Naive thymus-derived CD4-positive, alpha-beta T cell (primary cell): ENCODE measurements at regions of chr3 and their contacts with region 1.

Region 1: DNA sequence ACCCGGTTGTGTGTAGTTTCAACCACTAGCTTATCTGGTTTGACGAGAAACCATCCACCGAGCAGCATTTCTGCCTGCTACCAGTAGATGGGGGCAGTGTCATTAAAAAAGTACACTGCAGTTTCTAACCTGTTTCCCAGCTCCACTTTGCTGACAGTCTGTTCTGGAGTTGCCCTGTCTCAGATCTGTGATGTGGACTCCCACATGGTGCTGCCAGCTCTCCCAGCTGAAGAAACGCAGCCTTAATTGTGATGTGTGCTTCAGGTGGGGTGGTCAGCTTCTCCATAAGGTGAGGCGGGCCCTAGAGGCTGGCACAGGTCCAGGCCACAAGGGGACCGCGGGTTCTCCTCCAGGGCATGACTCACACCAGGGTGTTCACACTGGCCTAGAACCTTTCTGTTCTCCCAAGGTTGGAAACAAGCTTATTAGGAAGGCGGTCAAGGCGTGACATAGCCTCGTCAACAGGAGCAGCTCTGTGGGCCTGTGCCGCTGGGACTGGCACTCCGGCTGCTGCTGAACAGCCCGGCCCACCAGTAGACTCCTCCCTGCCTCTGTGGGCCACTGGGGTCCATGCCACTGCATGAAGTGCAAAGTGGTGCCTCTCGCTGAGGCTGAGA is 2.9 kb upstream of the FAM43A start:
- DNase-seq: peak; percentile 33 to 75 (median 60)
- ATAC-seq: peak; percentile 77
- H3K4me3 ChIP-seq: no peak overlapping the region
- H3K4me3 Mint-ChIP-seq: peak overlapping the region in 2 of 10 donors; percentile 12 to 25
- H3K27ac ChIP-seq: no peak overlapping the region
- H3K27ac Mint-ChIP-seq: peak overlapping the region in 1 of 9 donors; percentile 25
- H3K4me1 ChIP-seq: peaks cover 12 to 14% of the 10 kb centered on the region in 2 donors
- H3K4me1 Mint-ChIP-seq: peaks cover 10 to 41% (median 28%) of the 10 kb centered on the region in 7 donors
- H3K27me3 ChIP-seq: no peaks in the 10 kb centered on the region
- H3K27me3 Mint-ChIP-seq: peaks cover 0 to 37% (median 0%) of the 10 kb centered on the region in 5 donors

Region 2: GRCh38 chr3:194592798-194593752 is 89.7 kb before region 1 on chr3:
- CTCF ChIA-PET with region 1: no interaction called
- POLR2A ChIA-PET with region 1: no interaction called
- intact Hi-C with region 1: loop called in 1 of 2 experiments (anchors 5 kb)
- DNase-seq: no peak
- ATAC-seq: no peak
- H3K4me3 ChIP-seq: no peak overlapping the region
- H3K4me3 Mint-ChIP-seq: no peak overlapping the region
- H3K27ac ChIP-seq: no peak overlapping the region
- H3K27ac Mint-ChIP-seq: no peak overlapping the region
- H3K4me1 ChIP-seq: no peaks in the 10 kb centered on the region
- H3K4me1 Mint-ChIP-seq: peaks cover 0 to 7% (median 4%) of the 10 kb centered on the region in 7 donors
- H3K27me3 ChIP-seq: no peaks in the 10 kb centered on the region
- H3K27me3 Mint-ChIP-seq: no peaks in the 10 kb centered on the region

Region 3: GRCh38 chr3:194777729-194778128 is 94.9 kb after region 1 on chr3:
- CTCF ChIA-PET with region 1: no interaction called
- POLR2A ChIA-PET with region 1: no interaction called
- intact Hi-C with region 1: no loop called
- DNase-seq: no peak
- ATAC-seq: no peak
- H3K4me3 ChIP-seq: no peak overlapping the region
- H3K4me3 Mint-ChIP-seq: no peak overlapping the region
- H3K27ac ChIP-seq: no peak overlapping the region
- H3K27ac Mint-ChIP-seq: no peak overlapping the region
- H3K4me1 ChIP-seq: no peaks in the 10 kb centered on the region
- H3K4me1 Mint-ChIP-seq: peaks cover 0 to 2% (median 0%) of the 10 kb centered on the region in 7 donors
- H3K27me3 ChIP-seq: no peaks in the 10 kb centered on the region
- H3K27me3 Mint-ChIP-seq: peaks cover 16 to 27% (median 23%) of the 10 kb centered on the region in 5 donors

Region 4: GRCh38 chr3:195001961-195002861 is 319.4 kb after region 1 on chr3:
- CTCF ChIA-PET with region 1: no interaction called
- POLR2A ChIA-PET with region 1: no interaction called
- intact Hi-C with region 1: loop called in 1 of 2 experiments (anchors 1 kb)
- DNase-seq: peak in 4 of 9 donors; percentile 5 to 12 (median 10)
- ATAC-seq: peak; percentile 65
- H3K4me3 ChIP-seq: no peak overlapping the region
- H3K4me3 Mint-ChIP-seq: no peak overlapping the region
- H3K27ac ChIP-seq: no peak overlapping the region
- H3K27ac Mint-ChIP-seq: no peak overlapping the region
- H3K4me1 ChIP-seq: no peaks in the 10 kb centered on the region
- H3K4me1 Mint-ChIP-seq: peaks cover 0 to 6% (median 0%) of the 10 kb centered on the region in 7 donors
- H3K27me3 ChIP-seq: no peaks in the 10 kb centered on the region
- H3K27me3 Mint-ChIP-seq: peaks cover 0 to 14% (median 0%) of the 10 kb centered on the region in 5 donors

Region 5: DNA sequence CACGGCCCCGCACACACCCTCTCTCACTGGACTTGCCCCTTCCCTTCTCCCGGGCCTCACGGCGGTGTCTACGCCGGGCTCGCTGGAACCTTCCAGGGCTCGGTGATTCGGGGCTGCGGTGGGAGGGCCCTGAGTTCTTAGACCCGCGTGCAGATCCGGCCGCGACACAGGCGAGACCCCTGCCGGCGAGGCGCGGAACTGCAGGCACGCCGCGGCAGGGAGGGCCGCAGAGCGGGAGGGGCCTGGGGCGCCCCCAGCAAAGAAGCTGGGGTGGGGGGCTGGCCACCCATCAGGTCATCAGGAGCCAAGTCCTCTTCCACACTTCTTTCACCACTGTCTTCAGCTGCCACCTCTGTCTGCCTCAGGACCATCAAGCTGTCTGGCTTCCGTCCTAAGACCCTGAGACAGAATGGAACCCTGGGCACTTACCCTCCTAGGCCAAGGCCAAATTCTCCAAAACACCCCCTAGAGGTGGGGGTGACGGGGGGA is 423.7 kb after region 1 on chr3:
- CTCF ChIA-PET with region 1: interaction called, 53 read pairs
- POLR2A ChIA-PET with region 1: no interaction called
- intact Hi-C with region 1: loop called (anchors 1 kb)
- DNase-seq: peak; percentile 44 to 82 (median 70)
- ATAC-seq: peak; percentile 89
- H3K4me3 ChIP-seq: no peak overlapping the region
- H3K4me3 Mint-ChIP-seq: peak overlapping the region; percentile 10 to 71 (median 62)
- H3K27ac ChIP-seq: no peak overlapping the region
- H3K27ac Mint-ChIP-seq: peak overlapping the region in 1 of 9 donors; percentile 43
- H3K4me1 ChIP-seq: no peaks in the 10 kb centered on the region
- H3K4me1 Mint-ChIP-seq: peaks cover 5 to 10% (median 6%) of the 10 kb centered on the region in 7 donors
- H3K27me3 ChIP-seq: no peaks in the 10 kb centered on the region
- H3K27me3 Mint-ChIP-seq: no peaks in the 10 kb centered on the region

Region 6: DNA sequence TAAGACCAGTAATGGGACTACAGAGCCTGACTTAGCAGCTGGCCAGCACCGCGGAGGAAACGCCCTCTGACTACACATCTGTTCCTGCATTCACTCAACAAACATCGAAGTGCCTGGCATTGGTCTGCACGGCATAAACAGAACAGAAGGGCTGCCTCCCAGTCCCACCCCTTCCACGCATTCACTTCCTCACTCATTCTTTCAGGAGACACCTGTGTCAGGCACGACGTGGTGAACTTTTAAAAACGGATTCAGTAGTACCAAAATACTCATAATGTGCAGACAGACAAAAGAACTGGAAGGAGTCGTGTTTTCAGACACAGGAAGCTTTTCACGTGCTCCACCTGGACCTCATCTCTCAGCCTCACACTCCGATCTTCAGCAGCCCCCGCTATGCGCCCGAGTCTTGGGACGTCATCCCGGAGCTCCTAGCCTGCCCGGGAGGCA is 464.9 kb after region 1 on chr3:
- CTCF ChIA-PET with region 1: no interaction called
- POLR2A ChIA-PET with region 1: interaction called, 4 read pairs
- intact Hi-C with region 1: loop called in 1 of 2 experiments (anchors 1 kb)
- DNase-seq: peak in 3 of 9 donors; percentile 4 to 15 (median 4)
- ATAC-seq: peak; percentile 72
- H3K4me3 ChIP-seq: peak overlapping the region; percentile 27
- H3K4me3 Mint-ChIP-seq: peak overlapping the region; percentile 37 to 96 (median 79)
- H3K27ac ChIP-seq: no peak overlapping the region
- H3K27ac Mint-ChIP-seq: peak overlapping the region in 5 of 9 donors; percentile 78 to 94 (median 84)
- H3K4me1 ChIP-seq: peaks cover 4 to 9% of the 10 kb centered on the region in 2 donors
- H3K4me1 Mint-ChIP-seq: peaks cover 13 to 42% (median 34%) of the 10 kb centered on the region in 7 donors
- H3K27me3 ChIP-seq: no peaks in the 10 kb centered on the region
- H3K27me3 Mint-ChIP-seq: peaks cover 0 to 15% (median 0%) of the 10 kb centered on the region in 5 donors

Region 7: GRCh38 chr3:195259475-195260279 is 576.9 kb after region 1 on chr3:
- CTCF ChIA-PET with region 1: interaction called, 9 read pairs
- POLR2A ChIA-PET with region 1: interaction called, 4 read pairs
- intact Hi-C with region 1: loop called (anchors 1 kb)
- DNase-seq: peak; percentile 80 to 90 (median 84)
- ATAC-seq: peak; percentile 94
- H3K4me3 ChIP-seq: peak overlapping the region; percentile 36
- H3K4me3 Mint-ChIP-seq: peak overlapping the region; percentile 32 to 84 (median 64)
- H3K27ac ChIP-seq: peak overlapping the region; percentile 73
- H3K27ac Mint-ChIP-seq: peak overlapping the region in 7 of 9 donors; percentile 46 to 88 (median 84)
- H3K4me1 ChIP-seq: peaks cover 17 to 19% of the 10 kb centered on the region in 2 donors
- H3K4me1 Mint-ChIP-seq: peaks cover 13 to 24% (median 19%) of the 10 kb centered on the region in 7 donors
- H3K27me3 ChIP-seq: no peaks in the 10 kb centered on the region
- H3K27me3 Mint-ChIP-seq: no peaks in the 10 kb centered on the region

Region 8: DNA sequence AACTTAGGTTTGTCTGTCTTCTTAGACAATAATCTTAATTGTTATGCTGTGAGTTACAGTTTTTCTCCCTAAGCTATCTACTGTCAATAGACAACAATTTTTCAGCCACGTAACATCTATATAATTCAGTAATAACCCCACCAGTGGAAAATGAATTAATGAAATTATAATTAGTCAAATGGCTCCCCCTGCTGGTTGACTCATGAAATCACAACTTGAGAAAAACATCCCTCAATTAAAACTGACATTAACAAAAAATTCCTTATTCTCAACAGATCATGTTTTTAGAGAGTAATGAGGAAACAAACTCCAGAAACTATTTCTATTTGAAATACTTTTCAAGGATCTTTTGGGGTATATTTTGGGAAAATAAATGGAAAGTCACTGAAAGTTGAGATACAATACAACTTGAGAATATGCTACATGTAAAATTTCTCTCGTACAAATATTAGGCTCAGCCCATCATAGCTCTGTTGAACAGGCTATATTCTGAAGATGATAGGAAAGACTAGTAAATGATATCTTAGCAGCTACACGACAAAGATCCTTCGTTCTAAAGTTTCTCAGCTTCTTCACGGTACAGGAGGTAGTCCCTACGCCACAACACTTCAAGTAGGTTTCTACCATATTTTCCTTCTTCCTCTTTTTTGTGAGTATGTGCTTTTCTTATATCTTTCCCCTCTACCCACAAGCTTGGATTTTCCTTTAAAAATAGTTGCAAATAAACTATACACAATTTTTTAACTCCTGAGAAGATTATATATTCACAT is 839.6 kb after region 1 on chr3:
- CTCF ChIA-PET with region 1: interaction called, 4 read pairs
- POLR2A ChIA-PET with region 1: no interaction called
- intact Hi-C with region 1: loop called (anchors 1 to 2 kb)
- DNase-seq: peak in 6 of 9 donors; percentile 19 to 56 (median 50)
- ATAC-seq: peak; percentile 64
- H3K4me3 ChIP-seq: no peak overlapping the region
- H3K4me3 Mint-ChIP-seq: peak overlapping the region in 4 of 10 donors; percentile 10 to 61 (median 35)
- H3K27ac ChIP-seq: peak overlapping the region; percentile 50
- H3K27ac Mint-ChIP-seq: peak overlapping the region in 8 of 9 donors; percentile 56 to 91 (median 82)
- H3K4me1 ChIP-seq: peaks cover 18 to 33% of the 10 kb centered on the region in 2 donors
- H3K4me1 Mint-ChIP-seq: peaks cover 18 to 64% (median 56%) of the 10 kb centered on the region in 7 donors
- H3K27me3 ChIP-seq: no peaks in the 10 kb centered on the region
- H3K27me3 Mint-ChIP-seq: no peaks in the 10 kb centered on the region